ENCODE measurements at regions of chr6 and their contacts with region 1.

Region 1: GRCh38 chr6:111483736-111484632 is 966 bp upstream of the REV3L start:
- DNase-seq: peak; percentile 96
- H3K4me3 ChIP-seq: peak overlapping the region; percentile 62 to 85 (median 67)
- H3K27ac ChIP-seq: peak overlapping the region; percentile 97
- H3K4me1 ChIP-seq: peaks cover 24% of the 10 kb centered on the region
- H3K27me3 ChIP-seq: no peaks in the 10 kb centered on the region
- CTCF ChIP-seq: no peak
- POLR2A ChIP-seq: peak; percentile 93

Region 2: DNA sequence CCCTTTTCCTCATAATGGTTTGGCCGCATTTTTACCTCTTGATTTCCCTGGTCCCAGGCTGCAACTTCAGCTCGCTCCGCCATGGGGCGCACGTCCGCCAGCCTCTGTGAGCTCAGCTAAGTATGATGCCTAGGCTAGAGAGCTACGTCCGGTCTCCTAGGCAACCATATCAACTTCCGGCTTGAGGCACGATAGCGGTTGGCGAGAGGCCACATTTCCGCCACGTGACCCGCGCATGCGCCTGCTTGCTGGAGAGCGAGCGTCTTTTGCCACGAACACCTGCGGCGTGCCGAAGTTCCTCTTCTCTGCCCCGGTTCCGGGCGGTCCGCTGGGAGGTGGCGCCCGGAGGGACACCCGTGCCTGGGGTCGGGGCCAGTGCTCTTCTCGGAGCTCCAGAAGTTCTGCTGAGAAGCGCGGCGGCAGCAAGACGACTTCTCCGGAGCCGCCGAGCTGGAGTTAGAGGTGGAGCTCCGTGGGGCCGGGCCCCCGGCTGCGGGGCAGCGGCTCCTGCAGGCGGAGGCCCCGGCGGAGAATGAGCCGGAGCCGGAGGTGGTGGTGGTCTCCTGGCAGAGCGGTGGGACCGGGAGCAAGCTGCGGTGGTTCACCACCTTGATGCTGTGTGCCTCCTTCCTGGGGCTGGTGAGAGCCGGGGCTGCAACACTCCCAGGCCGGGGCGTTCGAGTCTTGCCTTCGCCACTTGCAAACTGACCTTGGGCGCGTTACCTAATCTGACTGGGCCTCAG is 224.7 kb before region 1 on chr6:
- CTCF ChIA-PET with region 1: interaction called, 73 read pairs
- POLR2A ChIA-PET with region 1: interaction called, 6 read pairs
- dilution Hi-C with region 1: no loop called
- intact Hi-C with region 1: loop called (anchors 1 kb)
- DNase-seq: peak; percentile 99
- H3K4me3 ChIP-seq: peak overlapping the region; percentile 41 to 68 (median 47)
- H3K27ac ChIP-seq: peak overlapping the region; percentile 55
- H3K4me1 ChIP-seq: peaks cover 11% of the 10 kb centered on the region
- H3K27me3 ChIP-seq: peaks cover 11 to 25% of the 10 kb centered on the region in 2 experiments
- CTCF ChIP-seq: peak; percentile 89 to 98
- POLR2A ChIP-seq: peak; percentile 81

Region 3: DNA sequence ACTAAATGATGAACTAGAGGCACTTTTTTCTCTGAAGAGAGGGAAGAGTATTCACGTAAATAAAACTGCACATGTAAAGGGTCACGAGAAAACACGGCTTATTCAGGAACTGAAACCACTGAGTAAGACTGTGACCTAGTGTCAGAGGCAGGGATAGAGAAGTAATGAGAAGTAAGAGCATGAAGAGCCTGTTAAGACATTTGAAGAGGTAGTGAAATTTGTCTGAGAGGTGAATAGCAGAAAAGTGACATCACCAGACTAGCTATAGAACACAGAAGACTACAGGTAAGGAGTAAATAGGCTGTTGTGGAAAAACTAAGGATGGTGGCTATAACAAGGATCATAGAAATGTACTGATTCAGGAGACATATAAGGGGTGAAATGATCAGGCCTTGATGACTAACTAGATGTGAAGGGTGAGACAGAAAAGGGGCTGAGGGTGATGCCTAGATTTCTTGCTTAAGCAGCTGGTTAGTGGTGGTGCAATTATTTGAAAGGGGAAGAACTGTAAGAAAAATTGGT is 77.7 kb before region 1 on chr6:
- CTCF ChIA-PET with region 1: no interaction called
- POLR2A ChIA-PET with region 1: no interaction called
- dilution Hi-C with region 1: no loop called
- intact Hi-C with region 1: no loop called
- DNase-seq: no peak
- H3K4me3 ChIP-seq: no peak overlapping the region
- H3K27ac ChIP-seq: no peak overlapping the region
- H3K4me1 ChIP-seq: no peaks in the 10 kb centered on the region
- H3K27me3 ChIP-seq: no peaks in the 10 kb centered on the region
- CTCF ChIP-seq: no peak
- POLR2A ChIP-seq: no peak

Region 4: DNA sequence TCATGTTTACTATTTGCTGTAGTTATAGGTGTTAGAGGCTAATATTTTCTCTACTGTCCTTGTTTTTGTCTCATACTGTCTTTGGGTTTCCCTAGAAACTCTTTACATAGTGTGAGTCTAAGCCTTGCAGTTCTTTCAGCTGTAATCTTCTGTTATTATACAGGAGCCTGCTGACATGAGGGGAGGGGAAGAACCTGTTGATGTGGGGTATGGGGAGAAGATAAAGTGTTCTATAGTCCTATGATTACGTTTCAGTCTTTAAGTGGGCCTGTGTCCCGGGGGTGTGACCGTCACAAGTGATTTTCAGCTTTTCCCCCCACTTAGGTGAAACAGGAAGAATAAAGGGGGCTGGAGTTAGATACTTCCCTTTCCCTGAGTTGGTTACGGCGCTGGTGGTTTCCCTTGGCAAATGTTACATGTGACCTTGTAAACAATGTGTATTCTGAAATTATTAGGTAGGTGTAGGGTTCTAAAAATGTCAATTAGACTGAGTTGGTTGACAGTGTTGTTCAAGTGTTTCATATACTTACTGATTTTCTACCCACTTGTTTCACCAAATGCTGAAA is 42.2 kb before region 1 on chr6:
- CTCF ChIA-PET with region 1: no interaction called
- POLR2A ChIA-PET with region 1: no interaction called
- dilution Hi-C with region 1: no loop called
- intact Hi-C with region 1: no loop called
- DNase-seq: no peak
- H3K4me3 ChIP-seq: no peak overlapping the region
- H3K27ac ChIP-seq: no peak overlapping the region
- H3K4me1 ChIP-seq: peaks cover 18% of the 10 kb centered on the region
- H3K27me3 ChIP-seq: no peaks in the 10 kb centered on the region
- CTCF ChIP-seq: no peak
- POLR2A ChIP-seq: no peak

Region 5: DNA sequence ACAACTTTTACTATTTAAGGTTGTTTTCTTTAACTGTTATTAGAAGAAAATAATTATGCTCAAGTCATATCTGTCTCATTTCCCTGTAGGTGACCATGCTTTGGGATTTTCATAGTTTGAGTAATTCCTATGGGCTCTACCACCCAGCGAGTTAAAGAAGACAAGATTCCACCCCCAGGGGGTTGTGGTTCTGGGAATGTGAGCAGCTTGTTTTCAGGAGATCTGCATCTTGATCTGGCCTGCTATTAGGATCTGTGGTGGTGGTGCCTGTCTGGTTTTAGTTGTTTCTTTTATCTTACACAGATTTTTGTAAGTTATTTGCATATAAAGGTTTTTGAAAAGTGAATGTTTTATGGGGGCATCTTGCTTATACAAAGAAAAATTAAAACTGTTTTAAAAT is 19.2 kb after region 1 on chr6:
- CTCF ChIA-PET with region 1: no interaction called
- POLR2A ChIA-PET with region 1: no interaction called
- dilution Hi-C with region 1: no loop called
- intact Hi-C with region 1: no loop called
- DNase-seq: no peak
- H3K4me3 ChIP-seq: no peak overlapping the region
- H3K27ac ChIP-seq: no peak overlapping the region
- H3K4me1 ChIP-seq: no peaks in the 10 kb centered on the region
- H3K27me3 ChIP-seq: no peaks in the 10 kb centered on the region
- CTCF ChIP-seq: no peak
- POLR2A ChIP-seq: no peak

Region 6: DNA sequence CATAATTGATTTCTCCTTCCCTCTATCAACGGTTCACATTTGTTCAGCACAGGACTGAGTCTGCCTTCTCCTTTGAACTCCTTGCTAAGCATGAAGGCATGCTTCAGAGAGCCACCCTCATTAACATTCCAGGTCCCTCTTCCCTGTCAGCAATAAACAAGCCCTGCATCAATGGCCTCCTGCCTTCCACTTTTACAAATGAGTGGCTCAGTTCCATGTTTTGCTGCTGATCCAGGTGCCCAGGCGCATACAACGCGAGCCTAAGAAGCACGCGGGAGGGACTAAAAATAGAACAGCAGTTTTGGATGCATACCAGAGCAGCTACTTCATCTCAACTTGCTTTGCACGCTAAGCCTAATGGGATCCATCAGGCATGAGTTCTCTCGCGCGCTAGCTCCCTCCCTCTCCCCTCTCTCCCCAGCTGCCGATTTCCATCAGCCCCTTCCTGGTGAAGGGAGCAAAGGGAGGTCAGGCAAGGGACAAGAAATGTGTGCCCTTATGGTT is 68.3 kb after region 1 on chr6:
- CTCF ChIA-PET with region 1: interaction called, 10 read pairs
- POLR2A ChIA-PET with region 1: no interaction called
- dilution Hi-C with region 1: no loop called
- intact Hi-C with region 1: loop called (anchors 1 kb)
- DNase-seq: peak; percentile 89
- H3K4me3 ChIP-seq: no peak overlapping the region
- H3K27ac ChIP-seq: peak overlapping the region; percentile 30
- H3K4me1 ChIP-seq: peaks cover 20% of the 10 kb centered on the region
- H3K27me3 ChIP-seq: no peaks in the 10 kb centered on the region
- CTCF ChIP-seq: no peak
- POLR2A ChIP-seq: no peak

Region 7: DNA sequence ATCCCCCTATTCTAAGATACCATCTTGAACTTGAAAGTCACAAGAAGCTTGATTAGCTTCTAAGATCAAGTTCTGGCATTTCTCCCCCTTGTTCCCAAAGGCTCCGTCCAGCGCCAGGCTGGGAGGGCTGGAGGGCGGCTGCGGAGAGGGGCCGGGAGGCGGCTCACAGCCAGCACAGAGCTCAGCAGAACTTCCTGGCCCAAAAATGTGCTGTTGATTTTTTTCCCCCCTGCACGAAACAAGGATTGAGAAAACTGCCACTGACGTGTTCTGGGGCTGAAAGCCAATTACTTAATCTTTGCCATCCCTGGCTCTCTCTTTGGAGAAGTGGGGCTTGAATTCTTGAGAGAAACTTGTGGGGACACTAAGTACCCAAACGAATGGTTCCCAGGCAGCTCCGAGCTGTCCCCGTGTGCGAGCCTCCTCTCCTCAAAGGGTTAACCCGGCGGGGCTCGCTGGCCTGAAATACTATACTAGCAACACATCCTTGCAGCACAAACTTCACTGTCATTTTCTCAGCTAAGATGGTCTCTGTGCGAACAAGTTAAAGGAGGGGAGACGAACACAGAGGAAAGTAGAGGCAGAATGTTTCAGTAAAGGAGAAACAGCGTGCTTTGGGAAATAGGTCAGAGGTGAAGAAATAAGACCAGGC is 121.2 kb after region 1 on chr6:
- CTCF ChIA-PET with region 1: interaction called, 11 read pairs
- POLR2A ChIA-PET with region 1: interaction called, 5 read pairs
- dilution Hi-C with region 1: no loop called
- intact Hi-C with region 1: loop called (anchors 1 kb)
- DNase-seq: peak; percentile 77
- H3K4me3 ChIP-seq: peak overlapping the region; percentile 37 to 44 (median 38)
- H3K27ac ChIP-seq: peak overlapping the region; percentile 92
- H3K4me1 ChIP-seq: peaks cover 59% of the 10 kb centered on the region
- H3K27me3 ChIP-seq: no peaks in the 10 kb centered on the region
- CTCF ChIP-seq: no peak
- POLR2A ChIP-seq: no peak

Region 8: GRCh38 chr6:111663692-111664564 is 179.9 kb after region 1 on chr6:
- CTCF ChIA-PET with region 1: no interaction called
- POLR2A ChIA-PET with region 1: no interaction called
- dilution Hi-C with region 1: no loop called
- intact Hi-C with region 1: no loop called
- DNase-seq: peak; percentile 38
- H3K4me3 ChIP-seq: no peak overlapping the region
- H3K27ac ChIP-seq: no peak overlapping the region
- H3K4me1 ChIP-seq: peaks cover 27% of the 10 kb centered on the region
- H3K27me3 ChIP-seq: no peaks in the 10 kb centered on the region
- CTCF ChIP-seq: no peak
- POLR2A ChIP-seq: no peak

Region 9: GRCh38 chr6:111683749-111684267 is 199.8 kb after region 1 on chr6:
- CTCF ChIA-PET with region 1: no interaction called
- POLR2A ChIA-PET with region 1: no interaction called
- dilution Hi-C with region 1: no loop called
- intact Hi-C with region 1: loop called (anchors 2 kb)
- DNase-seq: peak; percentile 91
- H3K4me3 ChIP-seq: peak overlapping the region in 1 of 3 experiments; percentile 1
- H3K27ac ChIP-seq: peak overlapping the region; percentile 82
- H3K4me1 ChIP-seq: peaks cover 51% of the 10 kb centered on the region
- H3K27me3 ChIP-seq: no peaks in the 10 kb centered on the region
- CTCF ChIP-seq: no peak
- POLR2A ChIP-seq: no peak